ENCODE measurements at regions of chr10 and their contacts with region 1.

Region 1: GRCh38 chr10:118754720-118755480 is at the start of gene CACUL1:
- DNase-seq: peak; percentile 100
- ATAC-seq: peak; percentile 94
- H3K4me3 ChIP-seq: peak within 1 kb of the TSS; percentile 88
- H3K27ac ChIP-seq: peak within 1 kb of the TSS; percentile 77
- H3K4me1 ChIP-seq: no peaks in the 10 kb centered on the region
- H3K27me3 ChIP-seq: 0 out of 2 replicates have a peak, but pooled peaks cover 1% of the 10 kb centered on the region
- CTCF ChIP-seq: no peak
- POLR2A ChIP-seq: peak; percentile 85
- RAD21 ChIP-seq: no peak
- total RNA-seq, gene CACUL1: 23.5 and 24.7 TPM in 2 replicates

Region 2: DNA sequence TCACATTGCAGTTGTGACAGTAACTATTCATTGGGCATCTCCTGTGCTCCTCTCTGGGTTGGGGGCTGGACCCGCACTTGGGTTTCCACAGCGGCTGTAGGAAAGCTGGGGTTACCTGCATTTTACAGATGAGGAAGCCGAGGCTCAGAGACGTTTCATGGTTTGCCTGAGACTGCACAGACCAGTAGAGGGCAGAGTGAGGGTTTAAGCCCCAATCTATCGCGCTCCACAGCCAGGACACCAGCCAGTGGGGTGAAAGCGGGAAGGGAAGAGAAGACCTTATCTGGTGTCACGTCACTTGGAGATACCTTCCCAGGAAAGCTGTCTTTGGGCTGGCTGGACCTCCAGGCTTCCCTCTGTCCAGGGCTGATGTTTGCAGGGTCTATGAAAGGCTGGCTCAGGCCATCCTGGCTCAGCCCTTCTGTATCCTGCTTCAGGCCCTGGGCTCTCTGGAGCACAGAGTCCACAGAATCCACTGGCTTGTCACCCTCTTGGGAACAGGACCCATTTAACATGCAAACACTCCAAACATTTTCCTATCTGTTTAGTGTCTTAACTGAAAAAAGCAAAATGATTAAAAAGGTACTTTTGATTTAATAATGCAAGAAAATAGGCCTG is 1044.6 kb before region 1 on chr10:
- CTCF ChIA-PET with region 1: no interaction called
- POLR2A ChIA-PET with region 1: no interaction called
- dilution Hi-C with region 1: no loop called
- in situ Hi-C with region 1: no loop called
- intact Hi-C with region 1: no loop called
- DNase-seq: no peak
- ATAC-seq: no peak
- H3K4me3 ChIP-seq: no peak overlapping the region
- H3K27ac ChIP-seq: no peak overlapping the region
- H3K4me1 ChIP-seq: no peaks in the 10 kb centered on the region
- H3K27me3 ChIP-seq: no peaks in the 10 kb centered on the region
- CTCF ChIP-seq: no peak
- POLR2A ChIP-seq: no peak
- RAD21 ChIP-seq: no peak

Region 3: DNA sequence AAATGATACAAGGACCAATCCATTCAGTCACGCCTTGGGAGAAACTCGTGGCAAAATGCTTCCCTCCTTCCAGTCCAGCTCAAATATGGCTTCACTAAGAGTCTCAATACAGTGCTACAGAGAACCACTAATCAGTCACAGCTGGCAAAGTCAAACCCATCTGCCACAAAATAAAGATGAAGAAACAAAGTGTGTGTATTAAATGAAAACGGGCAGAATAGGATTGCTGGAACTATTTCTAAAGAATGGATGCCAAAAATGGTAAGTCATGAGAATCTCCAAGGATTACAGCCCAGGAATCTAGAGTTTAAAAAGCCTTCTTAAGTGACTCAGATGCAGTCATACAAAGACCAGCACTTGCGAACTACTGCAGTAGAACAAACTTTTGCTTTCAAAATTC is 62.0 kb before region 1 on chr10:
- CTCF ChIA-PET with region 1: no interaction called
- POLR2A ChIA-PET with region 1: no interaction called
- dilution Hi-C with region 1: no loop called
- in situ Hi-C with region 1: no loop called
- intact Hi-C with region 1: loop called (anchors 2 kb)
- DNase-seq: peak; percentile 94
- ATAC-seq: peak; percentile 77
- H3K4me3 ChIP-seq: no peak overlapping the region
- H3K27ac ChIP-seq: peak overlapping the region; percentile 27
- H3K4me1 ChIP-seq: peaks cover 6% of the 10 kb centered on the region
- H3K27me3 ChIP-seq: no peaks in the 10 kb centered on the region
- CTCF ChIP-seq: no peak
- POLR2A ChIP-seq: no peak
- RAD21 ChIP-seq: no peak

Region 4: GRCh38 chr10:119006451-119007210 is 251.7 kb after region 1 on chr10:
- CTCF ChIA-PET with region 1: no interaction called
- POLR2A ChIA-PET with region 1: no interaction called
- dilution Hi-C with region 1: no loop called
- in situ Hi-C with region 1: no loop called
- intact Hi-C with region 1: loop called (anchors 1 kb)
- DNase-seq: peak; percentile 100
- ATAC-seq: peak; percentile 91
- H3K4me3 ChIP-seq: no peak overlapping the region
- H3K27ac ChIP-seq: no peak overlapping the region
- H3K4me1 ChIP-seq: peaks cover 12% of the 10 kb centered on the region
- H3K27me3 ChIP-seq: peaks cover 25% of the 10 kb centered on the region
- CTCF ChIP-seq: 0 out of 2 replicates have a peak, but pooled peaks have one; percentile 3
- POLR2A ChIP-seq: no peak
- RAD21 ChIP-seq: no peak

Region 5: DNA sequence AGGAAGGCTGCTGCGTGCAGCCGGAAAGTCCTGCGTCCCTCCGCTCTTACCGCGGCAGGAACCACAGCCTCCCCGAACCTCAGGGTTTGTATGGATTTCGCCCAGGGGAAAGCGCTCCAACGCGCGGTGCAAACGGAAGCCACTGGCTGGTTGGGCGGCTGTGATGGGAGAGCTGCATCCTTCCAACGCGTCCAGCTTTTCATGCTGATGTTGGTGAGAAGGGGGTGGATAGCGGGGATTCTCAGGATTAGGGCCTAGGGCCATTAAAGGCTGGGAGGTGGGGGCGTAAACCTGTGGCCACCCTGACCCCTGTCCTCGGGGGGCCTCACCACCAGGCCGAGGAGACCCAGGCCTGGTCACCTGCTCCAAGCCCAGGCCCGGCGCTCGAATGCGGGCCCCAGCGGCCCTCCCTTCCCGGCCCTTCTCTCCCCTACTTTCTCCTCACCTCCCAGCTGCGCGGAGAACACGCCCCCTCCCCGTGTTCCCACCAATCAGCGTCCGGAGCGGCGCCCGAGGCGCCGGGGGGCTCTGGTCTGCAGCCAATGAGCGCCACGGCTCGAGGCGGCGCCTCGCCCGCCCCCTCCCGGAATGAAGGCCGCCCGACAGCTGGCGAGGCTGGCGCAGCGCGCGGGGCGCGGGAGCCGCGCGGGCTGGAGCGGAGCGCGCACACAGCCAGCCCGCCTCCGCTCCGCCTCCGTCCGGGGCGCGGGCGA is 274.2 kb after region 1 on chr10:
- CTCF ChIA-PET with region 1: no interaction called
- POLR2A ChIA-PET with region 1: no interaction called
- dilution Hi-C with region 1: no loop called
- in situ Hi-C with region 1: loop called (anchors 10 kb)
- intact Hi-C with region 1: loop called (anchors 5 kb)
- DNase-seq: peak; percentile 81
- ATAC-seq: peak; percentile 84
- H3K4me3 ChIP-seq: peak overlapping the region; percentile 60; the same call in 1 of the 2 replicates
- H3K27ac ChIP-seq: no peak overlapping the region
- H3K4me1 ChIP-seq: peaks cover 9% of the 10 kb centered on the region
- H3K27me3 ChIP-seq: peaks cover 2% of the 10 kb centered on the region; the same call in 1 of the 2 replicates
- CTCF ChIP-seq: peak; percentile 26; the same call in 1 of the 2 replicates
- POLR2A ChIP-seq: no peak
- RAD21 ChIP-seq: no peak

Measured in IMR-90 (cell line).